ENCODE measurements at regions of chr11 and their contacts with region 1.

Region 1: GRCh38 chr11:103537904-103538502 is 428.8 kb downstream of the DYNC2H1 start:
- DNase-seq: no peak
- H3K4me3 ChIP-seq: no peak overlapping the region
- CTCF ChIP-seq: peak; percentile 47

Region 2: GRCh38 chr11:103527736-103528445 is 10.1 kb before region 1 on chr11:
- CTCF ChIA-PET with region 1: interaction called, 14 read pairs
- POLR2A ChIA-PET with region 1: no interaction called
- DNase-seq: no peak
- H3K4me3 ChIP-seq: no peak overlapping the region
- CTCF ChIP-seq: no peak

Region 3: DNA sequence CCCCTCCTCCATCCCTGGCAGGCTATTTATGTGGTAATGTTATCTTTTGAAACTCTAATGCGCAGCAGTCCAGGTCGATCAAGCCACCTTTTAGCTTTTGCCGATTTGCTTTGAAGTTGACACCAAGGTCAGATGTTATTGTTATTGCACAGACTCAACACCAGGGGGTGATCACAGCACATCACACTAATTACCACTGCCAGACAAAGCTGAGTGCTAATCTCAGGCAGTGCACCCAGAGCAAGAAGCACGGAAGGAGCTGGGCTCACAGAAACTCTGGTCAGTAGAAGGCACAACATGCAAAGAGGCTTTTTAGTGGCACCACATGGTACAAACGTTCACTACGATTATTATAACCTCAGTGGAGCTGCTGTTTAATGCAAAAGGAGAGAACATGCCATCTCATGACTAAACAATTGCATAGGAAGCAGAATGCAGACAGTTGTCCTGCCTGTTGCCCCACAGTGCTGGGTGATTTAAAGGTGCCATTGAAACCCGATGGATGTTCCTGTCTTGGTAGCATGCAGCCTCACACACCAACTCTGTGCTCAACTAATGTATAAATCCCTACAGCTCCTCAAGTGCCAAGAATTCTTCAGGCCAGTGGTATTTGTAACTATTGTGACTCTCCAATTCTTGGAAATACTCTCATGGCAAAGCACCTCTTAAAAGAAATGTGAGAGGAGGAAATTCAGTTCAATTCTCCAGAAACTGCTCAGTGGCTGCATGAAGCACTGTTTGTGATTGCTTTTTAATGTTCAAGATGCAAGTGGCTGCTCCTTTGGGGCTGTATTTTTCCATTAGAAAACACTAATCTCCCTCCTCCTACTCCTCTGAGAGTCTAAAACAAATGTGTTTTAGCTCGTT is 144.5 kb after region 1 on chr11:
- CTCF ChIA-PET with region 1: no interaction called
- POLR2A ChIA-PET with region 1: no interaction called
- DNase-seq: no peak
- H3K4me3 ChIP-seq: no peak overlapping the region
- CTCF ChIP-seq: peak; percentile 74

Measured in AG04449 (cell line).